ENCODE measurements at regions of chr1 and their contacts with region 1.

Region 1: GRCh38 chr1:89987170-89987819 is 7.6 kb upstream of the ZNF326 start:
- DNase-seq: peak; percentile 53
- H3K4me3 Mint-ChIP-seq: no peak overlapping the region
- H3K27ac Mint-ChIP-seq: no peak overlapping the region
- H3K4me1 Mint-ChIP-seq: peaks cover 2% of the 10 kb centered on the region
- H3K27me3 Mint-ChIP-seq: peaks cover 15% of the 10 kb centered on the region

Region 2: GRCh38 chr1:89804642-89805237 is 182.6 kb before region 1 on chr1:
- CTCF ChIA-PET with region 1: interaction called, 22 read pairs
- POLR2A ChIA-PET with region 1: interaction called, 3 read pairs
- DNase-seq: peak; percentile 87
- H3K4me3 Mint-ChIP-seq: no peak overlapping the region
- H3K27ac Mint-ChIP-seq: no peak overlapping the region
- H3K4me1 Mint-ChIP-seq: peaks cover 4% of the 10 kb centered on the region
- H3K27me3 Mint-ChIP-seq: peaks cover 2% of the 10 kb centered on the region

Region 3: DNA sequence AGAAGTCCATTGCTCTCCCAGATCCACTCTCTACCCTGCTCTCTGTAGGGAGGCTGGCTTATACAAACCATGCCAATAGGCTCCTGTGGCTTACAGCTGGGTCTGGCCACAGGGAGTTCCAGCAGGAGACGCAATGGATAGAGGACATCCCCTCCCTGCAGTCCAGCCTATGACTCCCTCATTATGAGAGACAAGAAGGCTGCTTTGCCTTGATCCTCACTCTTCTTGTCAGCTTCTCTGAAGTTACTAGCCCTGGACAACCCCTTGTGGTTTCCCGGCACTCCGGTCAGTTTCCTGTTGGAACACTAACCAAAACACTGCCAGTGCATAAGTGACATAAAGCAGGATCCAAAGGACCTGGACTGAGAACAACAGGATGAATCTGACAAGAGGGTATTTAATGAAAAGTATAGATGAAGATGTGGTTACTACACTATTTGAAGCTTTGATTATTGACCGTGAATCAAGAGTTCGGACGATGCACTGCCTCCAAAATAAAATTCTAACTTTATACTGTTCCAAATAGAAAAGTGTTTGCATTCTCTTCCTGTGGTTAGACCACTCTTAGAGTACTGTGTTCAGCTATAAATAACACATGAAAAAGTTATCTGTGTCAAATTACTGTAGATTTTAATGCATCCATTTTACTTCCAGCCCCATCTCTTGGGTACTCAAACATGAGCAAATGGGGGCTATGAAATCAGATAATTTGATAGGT is 25.1 kb before region 1 on chr1:
- CTCF ChIA-PET with region 1: no interaction called
- POLR2A ChIA-PET with region 1: no interaction called
- DNase-seq: no peak
- H3K4me3 Mint-ChIP-seq: no peak overlapping the region
- H3K27ac Mint-ChIP-seq: no peak overlapping the region
- H3K4me1 Mint-ChIP-seq: peaks cover 11% of the 10 kb centered on the region
- H3K27me3 Mint-ChIP-seq: peaks cover 14% of the 10 kb centered on the region

Measured in activated CD4-positive, alpha-beta memory T cell treated with anti-CD3 and anti-CD28 coated beads, Interleukin-2, amount 10 ng/mL, durations not matched to agents 7 days and 5 days (primary cell).